AG04449 (cell line): ENCODE measurements at regions of chr1 and their contacts with region 1.

Region 1: DNA sequence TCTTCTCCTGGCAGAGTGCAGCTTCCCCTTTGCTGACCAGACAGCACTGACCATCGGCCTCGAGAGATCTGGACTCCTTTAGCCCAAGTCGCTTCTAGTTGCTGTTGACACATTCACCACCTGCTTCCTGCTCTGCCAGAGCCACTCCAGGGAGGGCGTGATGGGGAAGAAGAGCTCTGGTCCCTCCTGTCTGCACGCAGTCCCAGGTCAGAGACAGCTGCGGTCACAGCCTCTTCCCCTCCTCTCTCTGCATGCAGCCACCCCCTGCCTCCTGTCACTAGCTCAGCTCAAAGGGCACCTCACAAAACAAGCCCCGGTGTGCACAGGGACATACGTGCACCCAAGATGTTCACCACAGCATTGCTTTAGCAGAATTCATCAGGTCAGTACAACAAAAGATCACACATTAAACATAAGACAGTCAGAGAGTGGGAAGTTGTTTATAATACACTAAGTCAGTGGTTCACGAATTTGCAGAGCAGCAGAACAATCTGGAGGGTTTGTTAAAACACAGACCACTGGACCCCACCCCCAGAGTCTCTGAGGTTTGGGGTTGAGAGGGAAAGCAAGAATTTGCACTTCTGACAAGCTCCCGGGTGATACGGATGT is 132.9 kb downstream of the SYF2 start:
- DNase-seq: no peak
- H3K4me3 ChIP-seq: no peak overlapping the region
- CTCF ChIP-seq: no peak

Region 2: GRCh38 chr1:25072461-25072860 is 27.0 kb before region 1 on chr1:
- CTCF ChIA-PET with region 1: interaction called, 11 read pairs
- POLR2A ChIA-PET with region 1: no interaction called
- DNase-seq: no peak
- H3K4me3 ChIP-seq: no peak overlapping the region
- CTCF ChIP-seq: no peak

Region 3: DNA sequence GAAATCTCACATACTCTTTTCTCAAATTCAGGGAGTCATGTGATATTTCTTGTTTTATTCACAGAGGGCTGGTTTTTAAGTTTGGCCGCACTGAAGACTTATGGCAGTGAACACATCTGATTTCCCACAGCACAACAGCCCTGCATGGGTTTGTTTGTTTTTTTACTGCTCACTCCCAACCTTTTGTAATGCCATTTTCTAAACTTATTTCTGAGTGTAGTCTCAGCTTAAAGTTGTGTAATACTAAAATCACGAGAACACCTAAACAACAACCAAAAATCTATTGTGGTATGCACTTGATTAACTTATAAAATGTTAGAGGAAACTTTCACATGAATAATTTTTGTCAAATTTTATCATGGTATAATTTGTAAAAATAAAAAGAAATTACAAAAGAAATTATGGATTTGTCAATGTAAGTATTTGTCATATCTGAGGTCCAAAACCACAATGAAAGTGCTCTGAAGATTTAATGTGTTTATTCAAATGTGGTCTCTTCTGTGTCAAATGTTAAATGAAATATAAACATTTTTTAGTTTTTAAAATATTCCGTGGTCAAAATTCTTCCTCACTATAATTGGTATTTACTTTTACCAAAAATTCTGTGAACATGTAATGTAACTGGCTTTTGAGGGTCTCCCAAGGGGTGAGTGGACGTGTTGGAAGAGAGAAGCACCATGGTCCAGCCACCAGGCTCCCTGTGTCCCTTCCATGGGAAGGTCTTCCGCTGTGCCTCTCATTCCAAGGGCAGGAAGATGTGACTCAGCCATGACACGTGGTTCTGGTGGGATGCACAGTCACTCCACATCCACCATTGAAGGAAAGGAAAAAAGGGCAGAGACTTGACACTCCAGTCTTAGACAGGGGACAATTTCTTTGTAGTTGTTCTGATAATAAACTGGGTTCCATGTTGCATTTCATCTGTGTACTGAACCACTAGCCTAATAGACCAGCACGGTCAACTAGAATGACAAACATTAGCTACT is 261.4 kb after region 1 on chr1:
- CTCF ChIA-PET with region 1: no interaction called
- POLR2A ChIA-PET with region 1: no interaction called
- DNase-seq: no peak
- H3K4me3 ChIP-seq: no peak overlapping the region
- CTCF ChIP-seq: no peak